Calu3 (cell line): ENCODE measurements at regions of chr1 and their contacts with region 1.

Region 1: GRCh38 chr1:169348383-169349036 is 19.1 kb downstream of the NME7 start:
- DNase-seq: peak; percentile 46
- H3K4me3 Mint-ChIP-seq: no peak overlapping the region
- H3K27ac Mint-ChIP-seq: no peak overlapping the region
- H3K4me1 Mint-ChIP-seq: peaks cover 13% of the 10 kb centered on the region
- H3K27me3 Mint-ChIP-seq: no peaks in the 10 kb centered on the region
- CTCF ChIP-seq: peak; percentile 59

Region 2: DNA sequence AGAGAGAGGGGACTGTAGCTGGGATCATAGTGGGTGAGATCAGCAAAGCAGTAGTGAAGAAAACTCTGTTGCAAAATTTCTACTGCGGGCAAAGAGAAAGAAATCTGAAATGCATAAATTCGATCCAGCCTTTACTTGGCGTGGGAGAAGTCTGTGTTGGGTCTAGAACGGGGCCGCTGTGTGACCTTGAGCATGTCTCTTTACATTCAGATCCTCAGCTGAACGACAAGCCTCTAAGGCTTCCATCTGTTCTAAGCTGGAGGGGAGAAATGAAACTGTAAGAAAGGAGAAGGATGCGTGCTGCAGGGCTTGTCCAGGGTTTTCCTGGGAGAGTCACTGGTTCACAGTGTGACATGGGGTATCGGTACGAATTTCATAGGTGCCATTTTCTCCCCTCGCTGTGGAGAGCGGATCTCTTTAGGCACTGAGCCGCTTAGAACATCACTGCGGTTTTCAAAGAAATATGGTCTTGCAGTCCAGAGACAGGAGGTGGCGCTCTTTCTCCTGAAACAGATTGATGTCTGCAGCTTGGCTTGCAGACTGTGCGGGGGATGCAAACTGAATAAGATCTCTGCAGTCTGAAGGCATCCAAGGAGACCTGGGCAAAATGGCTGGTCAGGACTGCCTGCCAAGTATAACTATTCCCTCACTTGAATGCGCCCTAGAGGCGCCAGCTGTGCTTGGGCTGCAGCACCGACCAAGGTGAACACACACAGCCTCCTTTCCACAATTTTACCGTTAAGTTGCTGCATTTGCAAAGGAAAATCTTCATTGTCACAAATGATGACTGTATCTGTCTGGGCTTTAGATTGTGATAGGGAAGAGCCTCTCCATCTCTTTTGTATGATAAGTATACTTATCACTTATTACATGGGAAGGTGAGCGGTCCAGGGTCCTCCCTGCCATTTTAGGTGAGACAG is 908.8 kb before region 1 on chr1:
- CTCF ChIA-PET with region 1: no interaction called
- intact Hi-C with region 1: loop called (anchors 5 kb)
- DNase-seq: peak; percentile 88
- H3K4me3 Mint-ChIP-seq: peak overlapping the region; percentile 55
- H3K27ac Mint-ChIP-seq: no peak overlapping the region
- H3K4me1 Mint-ChIP-seq: peaks cover 28% of the 10 kb centered on the region
- H3K27me3 Mint-ChIP-seq: peaks cover 9% of the 10 kb centered on the region
- CTCF ChIP-seq: peak; percentile 92

Region 3: GRCh38 chr1:168637350-168637991 is 711.0 kb before region 1 on chr1:
- CTCF ChIA-PET with region 1: interaction called, 15 read pairs
- intact Hi-C with region 1: loop called (anchors 10 kb)
- DNase-seq: peak; percentile 18
- H3K4me3 Mint-ChIP-seq: peak overlapping the region; percentile 4
- H3K27ac Mint-ChIP-seq: peak overlapping the region; percentile 85
- H3K4me1 Mint-ChIP-seq: peaks cover 30% of the 10 kb centered on the region
- H3K27me3 Mint-ChIP-seq: no peaks in the 10 kb centered on the region
- CTCF ChIP-seq: peak; percentile 49

Region 4: GRCh38 chr1:169115891-169116585 is 232.5 kb before region 1 on chr1:
- CTCF ChIA-PET with region 1: interaction called, 4 read pairs
- intact Hi-C with region 1: loop called (anchors 1 kb)
- DNase-seq: peak; percentile 96
- H3K4me3 Mint-ChIP-seq: peak overlapping the region; percentile 60
- H3K27ac Mint-ChIP-seq: peak overlapping the region; percentile 99
- H3K4me1 Mint-ChIP-seq: peaks cover 93% of the 10 kb centered on the region
- H3K27me3 Mint-ChIP-seq: no peaks in the 10 kb centered on the region
- CTCF ChIP-seq: no peak

Region 5: DNA sequence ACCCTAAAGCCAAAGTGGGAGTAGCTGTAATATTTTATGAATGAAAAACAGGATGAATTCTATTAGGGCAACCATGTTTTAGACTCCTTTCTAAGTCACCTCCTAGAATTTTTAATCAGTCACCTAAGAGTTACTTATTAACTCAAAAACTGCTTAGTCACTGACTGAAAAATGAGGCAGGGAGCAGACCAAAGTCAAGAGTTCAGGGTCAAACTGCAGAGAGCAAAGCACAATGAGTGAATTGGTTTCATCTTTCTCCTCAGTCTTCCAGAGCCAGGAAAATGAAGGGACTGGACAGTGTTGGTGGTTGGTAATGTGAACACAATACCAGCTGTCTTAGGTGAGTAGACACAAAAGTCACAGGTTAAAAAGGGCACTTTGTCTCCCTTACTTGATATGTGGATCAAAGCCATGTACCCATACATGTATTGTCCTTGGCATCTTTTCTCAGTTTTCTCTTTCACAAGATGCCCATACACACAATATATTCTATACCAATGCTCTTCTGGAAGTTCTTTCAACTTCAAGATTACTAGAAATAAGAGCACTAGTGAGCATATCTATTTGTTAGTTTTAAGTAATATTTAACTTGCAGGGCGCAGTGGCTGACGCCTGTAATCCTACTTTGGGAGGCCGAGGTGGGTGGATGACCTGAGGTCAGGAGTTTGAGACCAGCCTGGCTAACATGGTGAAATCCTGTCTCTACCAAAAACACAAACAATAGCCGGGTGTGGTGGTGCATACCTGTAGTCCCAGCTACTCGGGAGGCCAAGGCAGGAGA is 199.8 kb before region 1 on chr1:
- CTCF ChIA-PET with region 1: interaction called, 4 read pairs
- intact Hi-C with region 1: loop called (anchors 5 kb)
- DNase-seq: peak; percentile 26
- H3K4me3 Mint-ChIP-seq: peak overlapping the region; percentile 39
- H3K27ac Mint-ChIP-seq: peak overlapping the region; percentile 74
- H3K4me1 Mint-ChIP-seq: peaks cover 48% of the 10 kb centered on the region
- H3K27me3 Mint-ChIP-seq: no peaks in the 10 kb centered on the region
- CTCF ChIP-seq: no peak